Caco-2 (cell line): ENCODE measurements at regions of chr18 and their contacts with region 1.

Region 1: GRCh38 chr18:74147779-74148542 is at the starts of genes FBXO15 and TIMM21:
- DNase-seq: peak; percentile 83 to 85
- H3K4me3 ChIP-seq: peak within 1 kb of the TSS; percentile 59
- H3K4me3 Mint-ChIP-seq: peak within 1 kb of the TSS; percentile 89
- H3K27ac Mint-ChIP-seq: peak within 1 kb of the TSS; percentile 72
- H3K4me1 ChIP-seq: no peaks in the 10 kb centered on the region
- H3K4me1 Mint-ChIP-seq: no peaks in the 10 kb centered on the region
- H3K27me3 ChIP-seq: no peaks in the 10 kb centered on the region
- H3K27me3 Mint-ChIP-seq: no peaks in the 10 kb centered on the region
- CTCF ChIP-seq: no peak
- total RNA-seq, gene FBXO15: 0.29 TPM in 1 of 2 replicates, not detected in the other
- total RNA-seq, gene TIMM21: 15.6 and 21.0 TPM in 2 replicates

Region 2: GRCh38 chr18:74190086-74190485 is 42.1 kb after region 1 on chr18:
- CTCF ChIA-PET with region 1: no interaction called
- POLR2A ChIA-PET with region 1: no interaction called
- intact Hi-C with region 1: loop called (anchors 5 kb)
- DNase-seq: no peak
- H3K4me3 ChIP-seq: no peak overlapping the region
- H3K4me3 Mint-ChIP-seq: no peak overlapping the region
- H3K27ac Mint-ChIP-seq: no peak overlapping the region
- H3K4me1 ChIP-seq: no peaks in the 10 kb centered on the region
- H3K4me1 Mint-ChIP-seq: peaks cover 9% of the 10 kb centered on the region
- H3K27me3 ChIP-seq: no peaks in the 10 kb centered on the region
- H3K27me3 Mint-ChIP-seq: no peaks in the 10 kb centered on the region
- CTCF ChIP-seq: no peak